Calu3 (cell line): ENCODE measurements at regions of chr3 and their contacts with region 1.

Region 1: DNA sequence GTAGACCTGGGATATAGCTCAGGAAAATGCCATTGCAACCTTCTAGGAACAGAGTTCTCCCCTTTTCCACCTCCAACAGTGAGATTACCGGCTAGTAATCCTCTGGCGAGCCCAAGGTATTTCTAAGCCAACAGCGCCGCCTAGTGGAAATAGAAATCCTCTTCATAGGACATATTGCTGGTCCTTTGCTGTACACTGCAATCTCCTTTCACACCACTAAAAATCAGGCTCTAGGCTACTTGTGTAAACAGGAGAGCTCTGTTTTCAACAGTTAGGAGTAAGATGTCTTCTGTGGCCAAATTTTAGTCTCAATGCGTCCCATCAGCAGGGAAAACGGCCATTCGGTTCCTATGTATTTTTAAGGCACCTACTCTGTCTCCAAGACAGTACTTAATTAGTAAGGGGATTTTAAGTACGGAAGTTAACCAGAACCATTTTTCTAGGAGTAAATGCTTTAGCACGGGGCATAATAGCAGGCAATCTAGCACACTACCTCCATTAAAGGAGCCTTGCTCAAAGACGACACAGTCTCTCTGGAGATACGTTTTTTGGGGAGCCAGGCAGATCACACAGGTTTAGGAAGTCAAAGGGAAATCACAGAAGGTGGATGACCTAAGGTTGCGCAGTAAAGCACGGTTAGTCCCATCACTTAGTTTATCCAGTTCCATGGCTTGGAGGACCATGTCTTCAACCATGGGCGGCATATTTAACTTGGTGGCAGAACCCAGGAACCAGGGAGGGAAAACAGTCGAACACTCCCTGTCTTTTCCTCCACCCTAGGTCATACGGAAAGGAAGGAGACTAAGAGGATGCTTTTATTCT is 43.8 kb downstream of the NCEH1 start:
- DNase-seq: peak; percentile 94
- H3K4me3 Mint-ChIP-seq: peak overlapping the region; percentile 51
- H3K27ac Mint-ChIP-seq: peak overlapping the region; percentile 73
- H3K4me1 Mint-ChIP-seq: peaks cover 51% of the 10 kb centered on the region
- H3K27me3 Mint-ChIP-seq: no peaks in the 10 kb centered on the region
- CTCF ChIP-seq: peak; percentile 99

Region 2: DNA sequence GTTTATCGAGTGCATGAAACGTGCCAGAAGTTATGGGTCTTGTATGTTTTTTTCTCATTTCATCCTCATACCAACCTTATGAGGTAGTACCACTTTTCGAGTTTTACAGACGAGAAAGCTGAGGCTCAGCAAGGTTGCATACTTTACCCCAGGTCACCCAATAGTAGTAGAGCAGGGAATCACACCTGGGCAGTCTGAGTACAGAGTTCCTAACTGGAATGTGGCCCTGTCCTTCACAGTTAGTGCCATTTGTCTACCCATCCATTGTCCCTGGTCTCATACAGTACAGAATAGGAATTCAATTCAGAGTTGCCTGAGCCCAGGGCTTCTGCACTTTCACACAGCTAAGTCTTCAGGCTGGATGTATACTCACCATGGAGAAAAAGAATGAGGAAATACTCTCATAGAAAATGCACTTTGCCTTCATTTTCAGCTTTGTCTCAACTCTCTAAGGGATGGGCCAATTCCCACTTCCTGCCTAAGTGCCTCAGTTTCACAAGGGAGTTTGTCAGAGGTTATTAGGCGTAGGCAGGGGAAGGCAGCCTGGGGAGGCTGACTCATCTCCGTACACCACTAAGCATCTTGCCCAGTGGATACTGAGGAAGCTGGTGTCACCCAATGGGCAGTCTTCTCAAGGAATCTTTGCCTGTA is 730.8 kb before region 1 on chr3:
- CTCF ChIA-PET with region 1: no interaction called
- intact Hi-C with region 1: no loop called
- DNase-seq: peak; percentile 84
- H3K4me3 Mint-ChIP-seq: peak overlapping the region; percentile 50
- H3K27ac Mint-ChIP-seq: peak overlapping the region; percentile 73
- H3K4me1 Mint-ChIP-seq: peaks cover 91% of the 10 kb centered on the region
- H3K27me3 Mint-ChIP-seq: no peaks in the 10 kb centered on the region
- CTCF ChIP-seq: no peak

Region 3: DNA sequence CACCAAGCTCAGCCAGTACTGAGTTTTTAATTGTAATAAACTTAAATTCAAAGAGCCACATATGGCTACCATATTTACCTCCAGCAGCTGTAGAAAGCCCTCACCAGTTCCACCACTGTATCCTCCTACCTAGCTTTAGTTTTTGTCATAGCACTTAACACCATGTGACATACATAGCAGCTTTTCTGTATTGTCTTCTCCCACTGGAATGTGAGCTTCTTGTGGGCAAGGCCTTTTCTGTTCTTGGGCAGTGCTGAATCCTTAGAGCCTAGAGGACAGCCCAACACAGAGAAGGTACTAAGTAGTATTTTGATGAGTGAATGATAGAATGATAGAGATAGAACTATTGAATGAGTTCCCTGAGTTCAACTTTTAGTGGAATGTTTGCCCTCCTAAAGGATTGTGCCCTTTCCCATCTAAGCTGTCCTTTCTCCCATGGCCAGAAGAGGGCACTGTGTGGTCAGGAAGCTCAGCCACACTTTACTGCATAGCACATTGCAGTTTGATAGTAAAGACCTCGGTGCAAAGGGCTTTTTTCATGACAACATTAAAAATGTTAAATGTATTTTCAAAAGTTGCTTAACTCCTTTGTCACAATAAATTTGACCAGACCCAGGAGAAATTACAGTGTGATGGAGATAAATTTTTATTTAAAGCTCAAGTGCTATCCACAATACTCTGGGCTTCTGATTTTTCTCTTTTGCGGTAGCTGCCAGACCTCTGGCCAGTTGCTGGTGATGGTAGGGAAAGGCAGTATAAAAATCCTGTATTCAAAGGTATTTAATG is 334.6 kb before region 1 on chr3:
- CTCF ChIA-PET with region 1: interaction called, 12 read pairs
- intact Hi-C with region 1: loop called (anchors 1 kb)
- DNase-seq: peak; percentile 79
- H3K4me3 Mint-ChIP-seq: no peak overlapping the region
- H3K27ac Mint-ChIP-seq: peak overlapping the region; percentile 27
- H3K4me1 Mint-ChIP-seq: peaks cover 25% of the 10 kb centered on the region
- H3K27me3 Mint-ChIP-seq: no peaks in the 10 kb centered on the region
- CTCF ChIP-seq: peak; percentile 86

Region 4: DNA sequence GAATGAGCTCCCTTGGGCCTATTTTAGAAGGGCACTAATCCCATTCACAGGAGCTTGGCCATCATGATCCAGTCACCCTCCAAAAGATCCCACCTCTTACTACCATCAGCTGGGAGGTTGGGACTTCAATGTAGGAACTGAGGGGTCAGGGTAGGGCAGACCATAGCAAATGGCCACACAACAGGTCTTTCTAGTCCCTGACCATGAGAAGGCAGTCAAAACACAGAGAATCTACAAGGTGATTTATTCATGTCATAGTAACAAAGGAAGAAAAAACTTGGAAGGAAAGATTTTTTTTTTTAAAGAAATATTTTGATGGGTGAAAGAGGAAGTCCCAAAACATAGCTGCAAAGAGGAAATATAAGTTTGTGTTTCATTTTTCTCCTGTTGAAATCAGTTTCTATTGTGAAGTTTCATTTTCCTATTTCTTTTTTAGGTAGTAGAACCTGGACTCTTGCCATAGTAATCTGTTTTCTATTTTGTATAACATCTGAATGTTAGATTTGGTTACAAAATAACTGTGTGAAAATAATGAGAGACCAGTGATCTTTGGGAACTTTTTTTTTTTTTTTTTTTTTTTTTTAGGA is 120.4 kb before region 1 on chr3:
- CTCF ChIA-PET with region 1: no interaction called
- intact Hi-C with region 1: loop called (anchors 5 kb)
- DNase-seq: no peak
- H3K4me3 Mint-ChIP-seq: peak overlapping the region; percentile 16
- H3K27ac Mint-ChIP-seq: peak overlapping the region; percentile 82
- H3K4me1 Mint-ChIP-seq: peaks cover 42% of the 10 kb centered on the region
- H3K27me3 Mint-ChIP-seq: no peaks in the 10 kb centered on the region
- CTCF ChIP-seq: no peak

Region 5: GRCh38 chr3:172635588-172635987 is 31.5 kb before region 1 on chr3:
- CTCF ChIA-PET with region 1: no interaction called
- intact Hi-C with region 1: loop called (anchors 1 kb)
- DNase-seq: peak; percentile 53
- H3K4me3 Mint-ChIP-seq: no peak overlapping the region
- H3K27ac Mint-ChIP-seq: peak overlapping the region; percentile 86
- H3K4me1 Mint-ChIP-seq: peaks cover 32% of the 10 kb centered on the region
- H3K27me3 Mint-ChIP-seq: no peaks in the 10 kb centered on the region
- CTCF ChIP-seq: no peak

Region 6: GRCh38 chr3:172750368-172751174 is 83.5 kb after region 1 on chr3 and contains the start of gene ECT2:
- CTCF ChIA-PET with region 1: interaction called, 80 read pairs
- intact Hi-C with region 1: no loop called
- DNase-seq: peak; percentile 100
- H3K4me3 Mint-ChIP-seq: peak within 1 kb of the TSS; percentile 85
- H3K27ac Mint-ChIP-seq: peak within 1 kb of the TSS; percentile 97
- H3K4me1 Mint-ChIP-seq: peaks cover 65% of the 10 kb centered on the region
- H3K27me3 Mint-ChIP-seq: no peaks in the 10 kb centered on the region
- CTCF ChIP-seq: peak; percentile 89
- total RNA-seq, gene ECT2: 170 and 201 TPM in 2 replicates